Mammary epithelial cell (primary cell): ENCODE measurements at regions of chr18 and their contacts with region 1.

Region 1: GRCh38 chr18:61797696-61798590 is 94.9 kb downstream of the RNF152 start:
- DNase-seq: no peak
- H3K4me3 ChIP-seq: no peak overlapping the region
- H3K27ac ChIP-seq: no peak overlapping the region
- H3K4me1 ChIP-seq: no peaks in the 10 kb centered on the region
- H3K27me3 ChIP-seq: no peaks in the 10 kb centered on the region
- CTCF ChIP-seq: no peak

Region 2: DNA sequence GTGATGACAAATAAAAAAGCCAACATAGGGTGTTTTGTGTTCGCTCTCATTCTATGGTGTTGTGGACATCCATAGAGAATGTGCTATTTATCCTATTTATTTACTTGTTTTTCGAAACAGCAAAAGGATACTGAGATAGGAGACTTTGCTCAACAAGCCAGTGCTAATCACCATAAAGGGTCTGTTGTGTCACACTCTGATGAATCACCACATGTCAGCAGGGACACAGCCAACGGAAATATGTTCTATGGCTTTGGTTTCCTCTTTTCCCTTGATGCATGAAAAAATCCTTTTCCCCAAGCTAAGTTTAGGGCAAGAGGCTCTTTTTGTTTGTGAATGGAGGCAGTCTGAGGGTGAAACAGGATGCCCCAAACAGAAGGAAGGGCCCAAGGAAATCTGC is 59.5 kb before region 1 on chr18:
- CTCF ChIA-PET with region 1: no interaction called
- dilution Hi-C with region 1: no loop called
- in situ Hi-C with region 1: no loop called
- intact Hi-C with region 1: loop called (anchors 10 kb)
- DNase-seq: no peak
- H3K4me3 ChIP-seq: no peak overlapping the region
- H3K27ac ChIP-seq: no peak overlapping the region
- H3K4me1 ChIP-seq: no peaks in the 10 kb centered on the region
- H3K27me3 ChIP-seq: no peaks in the 10 kb centered on the region
- CTCF ChIP-seq: no peak